PC-3 (cell line): ENCODE measurements at regions of chr12 and their contacts with region 1.

Region 1: DNA sequence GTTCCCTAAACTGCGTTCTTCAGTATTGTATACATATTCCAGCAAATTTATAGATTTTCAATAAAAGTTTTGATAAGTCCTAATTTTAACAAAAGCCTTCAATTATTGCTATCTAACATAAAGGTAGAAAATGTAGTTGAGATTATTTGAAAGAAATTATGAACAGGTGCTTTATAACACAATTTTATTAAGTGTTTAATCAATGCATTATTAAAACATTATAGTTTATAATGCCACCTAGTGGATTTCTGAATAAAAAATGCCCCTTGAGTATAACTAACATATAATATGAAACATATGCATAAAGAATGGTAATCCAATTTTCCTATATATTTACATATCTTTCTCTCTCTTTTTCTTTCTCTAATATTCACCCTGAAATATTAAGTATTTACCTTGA is 515.3 kb downstream of the SLC6A15 start:
- DNase-seq: peak; percentile 56
- ATAC-seq: no peak
- H3K4me3 ChIP-seq: no peak overlapping the region
- H3K27ac ChIP-seq: no peak overlapping the region
- H3K4me1 ChIP-seq: no peaks in the 10 kb centered on the region
- H3K27me3 ChIP-seq: no peaks in the 10 kb centered on the region
- CTCF ChIP-seq: peak; percentile 70

Region 2: DNA sequence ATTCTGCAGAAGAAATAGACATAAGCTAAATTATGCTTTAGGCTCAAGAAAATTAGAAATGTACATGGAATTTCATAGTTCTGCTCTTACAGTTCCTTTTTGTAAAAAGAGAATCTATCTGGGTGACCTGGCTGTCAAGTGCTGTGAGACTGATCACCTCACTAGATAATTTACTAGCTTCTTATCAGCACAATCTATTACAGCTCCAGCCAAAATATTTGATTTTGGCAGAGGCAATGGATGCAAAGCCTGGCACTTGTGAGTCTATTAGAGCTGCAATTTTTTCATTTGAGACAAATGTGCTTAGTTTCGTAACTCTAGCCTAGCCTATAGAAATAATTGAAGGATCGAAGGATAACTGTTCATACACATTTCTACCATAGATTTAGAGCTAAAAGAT is 412.2 kb before region 1 on chr12:
- CTCF ChIA-PET with region 1: no interaction called
- POLR2A ChIA-PET with region 1: no interaction called
- intact Hi-C with region 1: loop called (anchors 10 kb)
- DNase-seq: peak; percentile 39
- ATAC-seq: no peak; the same call in 1 of the 2 replicates
- H3K4me3 ChIP-seq: no peak overlapping the region
- H3K27ac ChIP-seq: no peak overlapping the region
- H3K4me1 ChIP-seq: peaks cover 20% of the 10 kb centered on the region
- H3K27me3 ChIP-seq: no peaks in the 10 kb centered on the region
- CTCF ChIP-seq: no peak

Region 3: DNA sequence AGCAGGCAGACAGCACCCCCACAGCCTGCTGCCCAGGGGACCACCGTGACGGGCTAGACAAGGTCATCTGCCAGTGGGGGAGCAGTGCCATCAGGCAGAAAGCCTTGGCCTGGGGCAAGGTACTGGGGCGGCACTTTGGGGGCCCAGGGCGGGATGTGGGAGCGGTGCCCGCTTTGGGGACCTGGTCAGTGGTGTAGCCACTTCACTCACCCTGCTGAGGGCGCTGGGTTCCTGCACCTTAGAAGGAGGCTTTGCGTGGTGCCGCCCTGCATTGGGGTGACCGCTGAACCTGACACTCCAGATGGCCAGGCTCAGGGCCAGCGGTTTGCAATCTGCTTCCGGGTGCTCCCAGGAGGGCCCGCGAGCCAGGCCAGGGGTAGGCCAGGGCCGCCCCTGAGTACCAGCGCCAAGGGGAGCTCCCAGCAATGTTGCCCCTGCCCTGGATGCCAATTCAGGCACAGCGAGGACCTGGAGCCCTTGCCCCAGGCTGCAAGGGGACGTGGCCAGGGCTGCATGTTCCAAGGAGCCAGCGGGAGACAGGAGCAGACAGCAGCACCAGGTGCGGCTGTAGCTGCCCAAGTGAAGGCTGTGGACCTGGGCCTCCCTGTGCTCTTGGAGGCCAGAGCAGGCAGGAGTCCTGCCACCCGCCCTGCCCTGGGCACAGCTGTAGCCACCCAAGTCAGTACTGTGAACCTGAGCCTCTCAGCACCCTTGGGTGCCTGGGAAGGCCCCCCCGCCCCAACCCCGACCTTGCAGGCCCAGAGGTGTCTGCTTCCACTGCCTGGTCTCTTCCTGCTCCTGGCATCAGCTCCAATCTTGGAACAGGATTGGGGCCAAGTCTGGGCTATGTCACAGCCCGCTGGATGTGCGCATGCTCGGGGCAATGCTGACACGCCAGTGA is 35.4 kb before region 1 on chr12:
- CTCF ChIA-PET with region 1: no interaction called
- POLR2A ChIA-PET with region 1: no interaction called
- intact Hi-C with region 1: no loop called
- DNase-seq: no peak
- ATAC-seq: no peak
- H3K4me3 ChIP-seq: no peak overlapping the region
- H3K27ac ChIP-seq: no peak overlapping the region
- H3K4me1 ChIP-seq: no peaks in the 10 kb centered on the region
- H3K27me3 ChIP-seq: no peaks in the 10 kb centered on the region
- CTCF ChIP-seq: no peak